B cell (primary cell): ENCODE measurements at regions of chr3 and their contacts with region 1.

Region 1: DNA sequence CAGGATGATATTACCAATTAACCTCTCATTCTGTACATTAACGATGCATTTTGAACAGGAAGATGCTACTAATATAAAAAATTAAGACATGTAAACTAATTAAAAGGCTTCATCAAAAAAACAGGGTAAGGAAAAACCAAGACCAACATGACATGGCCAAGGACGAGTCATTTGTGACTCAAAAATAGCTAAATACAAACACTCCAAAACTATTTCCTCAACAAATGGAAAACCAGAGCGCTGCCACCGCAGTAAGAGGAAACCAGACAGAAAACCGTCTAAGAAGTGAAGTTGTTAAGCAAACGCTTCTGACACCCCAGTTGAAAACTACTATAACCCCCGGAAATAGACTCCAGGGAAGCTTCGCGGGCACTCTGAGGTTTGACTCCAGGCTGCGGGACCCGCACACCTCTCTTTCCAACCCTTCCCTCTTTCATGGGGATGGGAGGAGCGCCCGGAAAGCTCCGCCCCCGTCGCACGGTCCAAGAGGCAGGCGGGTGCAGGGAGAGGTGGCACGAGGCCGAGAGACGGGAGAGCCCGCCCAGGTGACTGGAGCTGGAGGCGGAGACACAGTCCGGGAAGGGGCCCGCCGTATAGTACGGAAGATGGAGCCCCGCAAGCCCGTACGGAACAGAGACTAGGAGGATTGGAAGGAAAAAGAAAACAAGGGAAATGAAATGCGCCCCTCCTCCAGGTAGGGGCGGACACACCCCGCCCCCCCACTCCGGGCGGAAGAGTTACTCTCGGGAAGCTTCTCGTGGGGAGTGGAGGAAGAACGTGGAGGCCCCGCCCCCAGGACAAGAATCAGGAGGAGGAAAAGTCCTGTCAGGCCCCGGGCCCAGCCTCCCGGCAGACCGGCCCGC is 708 bp downstream of the DCAF1 start:
- DNase-seq: peak; percentile 85
- ATAC-seq: peak; percentile 48
- H3K4me3 ChIP-seq: peak overlapping the region; percentile 72 to 95 (median 84)
- H3K4me3 Mint-ChIP-seq: peak overlapping the region; percentile 88
- H3K27ac ChIP-seq: peak overlapping the region; percentile 85 to 92
- H3K27ac Mint-ChIP-seq: peak overlapping the region; percentile 95
- H3K4me1 ChIP-seq: peaks cover 9 to 16% of the 10 kb centered on the region in 2 donors
- H3K4me1 Mint-ChIP-seq: peaks cover 17% of the 10 kb centered on the region
- H3K27me3 ChIP-seq: no peaks in the 10 kb centered on the region
- H3K27me3 Mint-ChIP-seq: no peaks in the 10 kb centered on the region
- CTCF ChIP-seq: no peak

Region 2: GRCh38 chr3:50862221-50862620 is 636.9 kb before region 1 on chr3:
- CTCF ChIA-PET with region 1: no interaction called
- POLR2A ChIA-PET with region 1: no interaction called
- intact Hi-C with region 1: no loop called
- DNase-seq: no peak
- ATAC-seq: no peak
- H3K4me3 ChIP-seq: no peak overlapping the region
- H3K4me3 Mint-ChIP-seq: no peak overlapping the region
- H3K27ac ChIP-seq: no peak overlapping the region
- H3K27ac Mint-ChIP-seq: no peak overlapping the region
- H3K4me1 ChIP-seq: no peaks in the 10 kb centered on the region
- H3K4me1 Mint-ChIP-seq: no peaks in the 10 kb centered on the region
- H3K27me3 ChIP-seq: no peaks in the 10 kb centered on the region
- H3K27me3 Mint-ChIP-seq: peaks cover 28% of the 10 kb centered on the region
- CTCF ChIP-seq: no peak

Region 3: DNA sequence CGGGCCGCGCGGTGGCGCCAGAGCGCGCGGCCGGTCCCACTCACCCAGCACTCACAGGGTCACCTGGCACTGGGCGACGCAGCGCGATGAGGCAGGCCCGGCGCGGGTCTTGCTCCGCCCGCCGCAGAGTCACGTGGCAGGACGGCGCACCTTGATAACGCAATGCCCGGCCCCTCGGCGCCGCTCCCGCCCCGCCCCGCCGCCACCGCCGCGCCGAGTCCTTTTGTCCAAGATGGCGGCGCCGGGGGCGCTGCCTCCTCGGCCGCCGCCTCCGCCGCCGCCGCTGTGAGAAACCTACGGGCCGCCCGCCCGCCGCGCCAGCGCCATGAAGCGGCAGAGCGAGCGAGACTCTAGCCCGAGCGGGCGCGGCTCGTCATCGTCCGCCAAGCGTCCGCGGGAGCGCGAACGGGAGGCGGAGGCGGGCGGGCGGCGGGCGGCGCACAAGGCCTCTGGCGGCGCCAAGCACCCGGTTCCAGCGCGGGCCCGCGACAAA is 108.0 kb before region 1 on chr3 and contains the start of gene RBM15B:
- CTCF ChIA-PET with region 1: interaction called, 42 read pairs
- POLR2A ChIA-PET with region 1: interaction called, 6 read pairs
- intact Hi-C with region 1: loop called (anchors 1 kb)
- DNase-seq: peak; percentile 97
- ATAC-seq: peak; percentile 95
- H3K4me3 ChIP-seq: peak within 1 kb of the TSS; percentile 11 to 66 (median 58)
- H3K4me3 Mint-ChIP-seq: peak within 1 kb of the TSS; percentile 84
- H3K27ac ChIP-seq: peak within 1 kb of the TSS; percentile 71 to 78
- H3K27ac Mint-ChIP-seq: peak within 1 kb of the TSS; percentile 88
- H3K4me1 ChIP-seq: peaks cover 24 to 41% of the 10 kb centered on the region in 2 donors
- H3K4me1 Mint-ChIP-seq: peaks cover 54% of the 10 kb centered on the region
- H3K27me3 ChIP-seq: no peaks in the 10 kb centered on the region
- H3K27me3 Mint-ChIP-seq: no peaks in the 10 kb centered on the region
- CTCF ChIP-seq: peak; percentile 87
- total RNA-seq, gene RBM15B: 29.5 and 30.5 TPM in 2 replicates

Region 4: GRCh38 chr3:51538459-51539290 is 39.6 kb after region 1 on chr3 and contains the start of gene RAD54L2:
- CTCF ChIA-PET with region 1: interaction called, 25 read pairs
- POLR2A ChIA-PET with region 1: interaction called, 10 read pairs
- intact Hi-C with region 1: loop called (anchors 1 kb)
- DNase-seq: peak; percentile 88
- ATAC-seq: peak; percentile 95
- H3K4me3 ChIP-seq: peak within 1 kb of the TSS; percentile 75 to 90 (median 84)
- H3K4me3 Mint-ChIP-seq: peak within 1 kb of the TSS; percentile 90
- H3K27ac ChIP-seq: peak within 1 kb of the TSS; percentile 57 to 90
- H3K27ac Mint-ChIP-seq: peak within 1 kb of the TSS; percentile 93
- H3K4me1 ChIP-seq: peaks cover 21 to 22% of the 10 kb centered on the region in 2 donors
- H3K4me1 Mint-ChIP-seq: peaks cover 31% of the 10 kb centered on the region
- H3K27me3 ChIP-seq: no peaks in the 10 kb centered on the region
- H3K27me3 Mint-ChIP-seq: peaks cover 5% of the 10 kb centered on the region
- CTCF ChIP-seq: no peak
- total RNA-seq, gene RAD54L2: 43.0 and 50.0 TPM in 2 replicates

Region 5: GRCh38 chr3:51670823-51671733 is 172.0 kb after region 1 on chr3 and contains the start of gene TEX264:
- CTCF ChIA-PET with region 1: interaction called, 190 read pairs
- POLR2A ChIA-PET with region 1: interaction called, 35 read pairs
- intact Hi-C with region 1: loop called (anchors 1 kb)
- DNase-seq: peak; percentile 97
- ATAC-seq: peak; percentile 85
- H3K4me3 ChIP-seq: peak within 1 kb of the TSS; percentile 46 to 99 (median 96)
- H3K4me3 Mint-ChIP-seq: peak within 1 kb of the TSS; percentile 91
- H3K27ac ChIP-seq: peak within 1 kb of the TSS; percentile 81 to 85
- H3K27ac Mint-ChIP-seq: peak within 1 kb of the TSS; percentile 92
- H3K4me1 ChIP-seq: peaks cover 25 to 55% of the 10 kb centered on the region in 2 donors
- H3K4me1 Mint-ChIP-seq: peaks cover 61% of the 10 kb centered on the region
- H3K27me3 ChIP-seq: no peaks in the 10 kb centered on the region
- H3K27me3 Mint-ChIP-seq: no peaks in the 10 kb centered on the region
- CTCF ChIP-seq: no peak
- total RNA-seq, gene TEX264: 31.8 and 39.1 TPM in 2 replicates

Region 6: GRCh38 chr3:51799879-51800749 is 301.0 kb after region 1 on chr3:
- CTCF ChIA-PET with region 1: interaction called, 71 read pairs
- POLR2A ChIA-PET with region 1: no interaction called
- intact Hi-C with region 1: no loop called
- DNase-seq: peak; percentile 62
- ATAC-seq: no peak
- H3K4me3 ChIP-seq: no peak overlapping the region
- H3K4me3 Mint-ChIP-seq: no peak overlapping the region
- H3K27ac ChIP-seq: no peak overlapping the region
- H3K27ac Mint-ChIP-seq: no peak overlapping the region
- H3K4me1 ChIP-seq: no peaks in the 10 kb centered on the region
- H3K4me1 Mint-ChIP-seq: no peaks in the 10 kb centered on the region
- H3K27me3 ChIP-seq: peaks cover 0 to 11% (median 5%) of the 10 kb centered on the region in 4 experiments
- H3K27me3 Mint-ChIP-seq: peaks cover 32% of the 10 kb centered on the region
- CTCF ChIP-seq: peak; percentile 91